Activated CD4-positive, alpha-beta T cell treated with anti-CD3 and anti-CD28 coated beads for 36 hours (primary cell): ENCODE measurements at regions of chr5 and their contacts with region 1.

Region 1: DNA sequence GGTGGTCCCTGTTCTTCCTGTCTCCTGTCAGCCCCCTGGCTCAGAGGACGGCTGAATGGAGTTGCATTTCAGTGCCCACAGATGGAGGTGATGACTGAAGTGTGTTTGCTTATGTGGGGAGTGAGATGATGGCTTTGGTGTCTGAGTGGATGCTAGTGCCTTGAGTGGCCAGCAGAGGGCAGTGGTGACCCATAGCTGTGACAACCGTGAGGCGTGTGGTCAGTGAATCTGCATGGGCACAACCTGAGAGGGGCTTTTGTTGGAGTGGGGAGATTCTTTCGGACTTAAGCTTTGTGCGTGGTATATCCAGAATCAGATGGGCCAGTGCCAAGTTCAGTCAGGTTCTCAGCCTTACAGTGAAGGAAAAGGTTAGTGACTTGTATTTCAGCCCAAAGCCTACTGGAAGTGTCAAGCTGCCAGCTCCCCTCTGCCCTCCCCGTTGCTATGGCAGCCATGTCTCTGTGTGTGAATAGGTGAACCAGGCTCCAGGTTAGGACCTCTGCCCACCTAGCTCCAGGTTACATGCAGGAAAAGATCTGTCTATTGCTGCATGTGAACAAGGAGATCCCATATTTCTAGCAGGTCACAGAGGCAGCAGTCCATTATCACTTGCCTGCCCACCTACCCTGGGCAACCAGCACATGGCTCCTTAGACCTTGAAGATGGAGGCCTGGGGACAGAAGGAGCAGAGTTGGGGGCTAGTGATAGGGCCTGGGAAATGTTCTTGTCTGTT is 14.7 kb upstream of the CXXC5 start:
- DNase-seq: peak; percentile 81
- ATAC-seq: peak; percentile 24
- H3K4me3 Mint-ChIP-seq: no peak overlapping the region
- H3K27ac Mint-ChIP-seq: peak overlapping the region; percentile 52
- H3K4me1 Mint-ChIP-seq: peaks cover 37% of the 10 kb centered on the region
- H3K27me3 Mint-ChIP-seq: no peaks in the 10 kb centered on the region

Region 2: DNA sequence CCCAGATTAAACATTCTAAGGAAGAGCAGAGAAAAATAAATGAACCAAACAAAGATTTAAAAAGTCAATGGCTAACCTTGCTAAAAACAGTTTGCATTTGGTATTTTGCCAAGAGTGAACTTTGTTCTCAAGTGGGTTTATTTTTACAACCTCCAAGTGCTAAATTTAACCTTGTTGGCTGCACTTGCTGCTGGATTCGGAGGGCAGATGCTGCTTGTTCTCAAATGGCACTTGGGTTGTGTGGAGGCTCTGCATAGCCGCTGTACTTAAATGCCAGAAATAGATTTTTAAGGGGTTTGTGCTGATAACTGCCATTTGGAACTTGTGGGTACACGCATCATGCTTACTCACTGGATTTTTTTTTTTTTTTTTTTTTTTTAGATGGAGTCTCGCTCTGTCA is 216.2 kb before region 1 on chr5:
- CTCF ChIA-PET with region 1: interaction called, 11 read pairs
- POLR2A ChIA-PET with region 1: no interaction called
- intact Hi-C with region 1: loop called (anchors 5 to 10 kb)
- DNase-seq: no peak
- ATAC-seq: no peak
- H3K4me3 Mint-ChIP-seq: no peak overlapping the region
- H3K27ac Mint-ChIP-seq: peak overlapping the region; percentile 98
- H3K4me1 Mint-ChIP-seq: peaks cover 50% of the 10 kb centered on the region
- H3K27me3 Mint-ChIP-seq: no peaks in the 10 kb centered on the region

Region 3: GRCh38 chr5:139574641-139575312 is 58.7 kb before region 1 on chr5:
- CTCF ChIA-PET with region 1: interaction called, 4 read pairs
- POLR2A ChIA-PET with region 1: no interaction called
- intact Hi-C with region 1: loop called (anchors 1 to 2 kb)
- DNase-seq: no peak
- ATAC-seq: peak; percentile 23
- H3K4me3 Mint-ChIP-seq: no peak overlapping the region
- H3K27ac Mint-ChIP-seq: no peak overlapping the region
- H3K4me1 Mint-ChIP-seq: peaks cover 79% of the 10 kb centered on the region
- H3K27me3 Mint-ChIP-seq: no peaks in the 10 kb centered on the region

Region 4: DNA sequence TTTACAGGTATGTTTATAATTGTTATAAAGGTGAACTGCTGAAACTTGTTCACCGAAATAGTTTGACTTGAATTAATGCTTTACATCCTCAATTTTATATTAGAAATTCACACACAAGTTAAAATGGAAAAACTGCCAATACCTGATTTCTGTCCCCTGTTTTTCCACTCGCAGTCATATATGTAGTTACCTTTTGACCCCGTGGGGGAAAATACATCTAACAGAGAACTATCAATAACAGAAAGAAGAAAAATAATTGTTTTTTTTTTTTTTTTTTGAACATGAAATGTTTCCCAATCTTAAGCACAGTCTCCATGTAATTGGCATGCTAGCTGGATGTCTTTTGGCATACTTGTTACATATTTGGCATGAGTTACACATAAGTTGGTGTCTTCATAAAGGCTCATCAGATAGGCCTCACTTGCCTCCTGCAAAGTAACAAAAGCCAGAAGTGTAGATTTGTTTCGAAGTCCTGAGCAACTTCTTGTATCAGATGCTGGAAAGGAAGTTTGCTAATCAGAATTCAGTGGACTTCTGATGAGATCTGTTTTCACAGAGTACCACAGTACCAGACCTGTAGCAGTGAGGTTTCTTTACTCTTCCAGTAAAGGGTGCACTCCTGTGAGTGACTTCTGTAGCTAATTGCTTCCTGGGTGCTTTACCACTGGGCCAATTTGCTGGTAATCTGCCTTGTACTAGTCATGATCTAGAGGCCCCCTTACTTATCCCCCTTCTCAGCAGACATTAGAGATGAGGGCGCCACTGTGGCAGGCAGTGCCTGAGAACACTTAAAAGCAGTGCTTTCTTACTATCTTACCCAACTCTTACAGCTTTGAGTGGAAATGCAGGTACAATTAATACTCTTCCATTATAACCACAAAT is 21.5 kb before region 1 on chr5:
- CTCF ChIA-PET with region 1: interaction called, 17 read pairs
- POLR2A ChIA-PET with region 1: no interaction called
- intact Hi-C with region 1: no loop called
- DNase-seq: peak; percentile 41
- ATAC-seq: peak; percentile 90
- H3K4me3 Mint-ChIP-seq: no peak overlapping the region
- H3K27ac Mint-ChIP-seq: peak overlapping the region; percentile 48
- H3K4me1 Mint-ChIP-seq: peaks cover 24% of the 10 kb centered on the region
- H3K27me3 Mint-ChIP-seq: no peaks in the 10 kb centered on the region

Region 5: GRCh38 chr5:139670369-139671095 is 37.1 kb after region 1 on chr5:
- CTCF ChIA-PET with region 1: interaction called, 7 read pairs
- POLR2A ChIA-PET with region 1: no interaction called
- intact Hi-C with region 1: loop called in 1 of 2 experiments (anchors 1 kb)
- DNase-seq: peak; percentile 59
- ATAC-seq: peak; percentile 61
- H3K4me3 Mint-ChIP-seq: no peak overlapping the region
- H3K27ac Mint-ChIP-seq: peak overlapping the region; percentile 43
- H3K4me1 Mint-ChIP-seq: peaks cover 27% of the 10 kb centered on the region
- H3K27me3 Mint-ChIP-seq: peaks cover 8% of the 10 kb centered on the region

Region 6: DNA sequence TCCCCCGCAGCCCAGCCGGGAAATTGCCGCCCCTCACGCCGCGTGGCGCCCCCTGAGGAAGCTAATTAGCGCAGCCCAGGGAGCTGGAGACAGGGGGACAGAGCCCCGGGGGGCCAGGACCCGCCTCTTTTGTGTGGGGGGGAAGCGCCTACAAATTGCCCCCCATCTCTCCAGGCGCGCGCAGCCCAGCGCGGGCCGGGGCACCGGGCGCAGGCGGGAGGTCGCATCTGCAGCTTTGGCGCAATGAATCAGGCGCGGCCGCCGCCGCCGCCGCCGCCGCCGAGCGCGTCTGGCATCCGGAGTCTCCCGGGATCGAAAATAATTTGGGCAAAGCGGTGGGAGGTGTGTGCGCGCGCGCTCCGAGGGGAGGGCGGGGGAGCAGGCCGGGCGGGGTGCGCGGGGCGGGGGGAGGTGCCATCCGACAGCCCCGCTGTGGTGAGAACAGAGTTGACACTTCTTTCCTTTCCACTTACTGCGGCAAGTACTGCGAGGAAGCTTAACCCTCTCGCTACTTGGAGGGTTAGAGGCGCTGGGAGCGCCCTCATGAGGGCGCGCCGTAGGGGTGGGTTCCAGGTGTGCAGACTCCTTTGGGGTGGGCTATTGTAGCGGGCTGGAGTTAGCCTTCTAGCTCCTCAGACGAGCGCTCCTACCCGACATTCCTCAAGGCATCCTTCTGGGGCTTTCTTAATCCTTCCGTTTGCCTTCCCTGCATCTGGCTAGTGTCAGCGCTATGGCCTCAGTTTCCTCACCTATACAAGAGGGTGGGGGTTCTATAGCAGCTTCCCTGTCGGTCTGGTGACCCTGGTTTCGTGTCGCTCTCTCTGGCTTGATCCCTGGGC is 77.8 kb after region 1 on chr5:
- CTCF ChIA-PET with region 1: interaction called, 3 read pairs
- POLR2A ChIA-PET with region 1: interaction called, 3 read pairs
- intact Hi-C with region 1: loop called (anchors 1 to 5 kb)
- DNase-seq: peak; percentile 78
- ATAC-seq: peak; percentile 84
- H3K4me3 Mint-ChIP-seq: peak overlapping the region; percentile 52
- H3K27ac Mint-ChIP-seq: no peak overlapping the region
- H3K4me1 Mint-ChIP-seq: peaks cover 13% of the 10 kb centered on the region
- H3K27me3 Mint-ChIP-seq: peaks cover 5% of the 10 kb centered on the region

Region 7: DNA sequence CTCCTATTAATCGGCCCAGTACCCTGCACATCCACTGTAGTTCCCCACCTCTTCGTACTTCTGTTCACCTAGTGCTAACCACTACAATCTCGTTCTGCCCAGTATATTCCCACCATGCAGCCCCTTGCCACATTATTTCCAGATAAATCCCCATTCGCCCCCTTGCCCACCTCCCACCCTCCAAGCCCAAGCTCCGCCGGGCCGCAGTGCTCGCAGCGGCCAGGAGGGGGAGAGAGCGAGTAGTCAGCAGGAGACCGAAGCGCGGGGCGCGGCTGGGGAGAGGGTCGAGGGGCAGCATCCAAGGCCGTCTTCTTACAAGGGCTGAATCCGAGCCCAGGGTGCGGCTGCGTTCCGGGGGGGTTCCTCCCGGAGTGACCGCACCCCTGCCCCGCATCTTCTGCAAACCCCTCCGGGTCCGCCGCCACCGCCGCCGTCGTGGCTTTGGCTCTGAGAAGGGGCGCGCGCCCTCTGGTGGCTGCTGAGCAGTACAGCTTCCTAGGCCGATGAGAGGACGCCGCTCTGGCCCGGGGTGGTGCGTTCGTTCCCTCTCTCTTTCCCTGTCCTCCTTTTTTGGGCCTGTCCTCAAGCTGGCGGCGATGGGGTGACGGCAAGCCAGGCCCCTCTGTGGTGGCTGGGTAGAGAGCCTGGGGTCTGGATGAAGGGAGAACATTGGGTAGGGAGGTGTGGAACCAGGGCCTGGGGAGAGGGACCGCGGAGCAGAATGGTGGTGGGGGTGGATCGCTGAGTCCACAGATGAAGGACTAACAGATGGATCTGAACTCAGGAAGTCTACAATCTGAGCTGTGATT is 132.2 kb after region 1 on chr5:
- CTCF ChIA-PET with region 1: interaction called, 81 read pairs
- POLR2A ChIA-PET with region 1: interaction called, 6 read pairs
- intact Hi-C with region 1: loop called (anchors 1 kb)
- DNase-seq: peak; percentile 92
- ATAC-seq: peak; percentile 93
- H3K4me3 Mint-ChIP-seq: peak overlapping the region; percentile 58
- H3K27ac Mint-ChIP-seq: no peak overlapping the region
- H3K4me1 Mint-ChIP-seq: peaks cover 7% of the 10 kb centered on the region
- H3K27me3 Mint-ChIP-seq: peaks cover 26% of the 10 kb centered on the region